GM12878 (cell line): ENCODE measurements at regions of chr2 and their contacts with region 1.

Region 1: DNA sequence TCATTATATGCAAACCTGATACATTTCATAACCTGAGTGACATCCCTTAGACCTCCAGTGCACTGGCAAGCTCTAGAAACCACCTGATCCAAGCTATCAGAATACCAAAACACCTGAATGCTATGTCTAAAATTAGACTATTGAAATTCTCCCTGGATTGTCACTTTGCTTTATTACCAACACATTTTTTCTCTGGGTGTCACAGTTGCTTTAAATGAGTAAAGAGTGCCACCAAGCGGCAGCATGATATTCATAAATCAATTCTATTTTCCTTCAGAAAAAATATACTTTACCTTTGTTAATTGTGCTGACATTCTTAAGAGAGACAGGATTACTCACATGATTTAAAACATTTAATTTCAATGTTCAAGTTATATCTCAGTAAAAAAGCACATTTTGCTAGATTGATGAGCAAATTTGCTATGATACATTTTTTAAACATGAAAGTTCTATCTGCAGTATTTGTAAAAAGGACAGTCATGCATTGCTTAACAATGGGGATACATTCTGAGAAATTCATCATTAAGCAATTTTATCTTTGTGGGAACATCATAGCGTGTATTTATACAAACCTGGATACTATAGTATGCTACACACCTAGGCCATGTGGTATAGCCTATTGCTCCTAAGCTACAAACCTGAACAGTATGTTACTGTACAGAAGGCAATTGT is 338.4 kb upstream of the SLC39A10 start:
- DNase-seq: no peak
- ATAC-seq: peak; percentile 46
- H3K4me3 ChIP-seq: no peak overlapping the region
- H3K27ac ChIP-seq: no peak overlapping the region
- H3K4me1 ChIP-seq: no peaks in the 10 kb centered on the region
- H3K27me3 ChIP-seq: no peaks in the 10 kb centered on the region
- CTCF ChIP-seq: peak; percentile 27 to 76 (median 50); a peak in 5 of 6 replicates
- EP300 ChIP-seq: no peak
- POLR2A ChIP-seq: no peak
- RAD21 ChIP-seq: peak; percentile 85

Region 2: GRCh38 chr2:194166818-194167217 is 1151.8 kb before region 1 on chr2:
- CTCF ChIA-PET with region 1: interaction called, 12 read pairs
- POLR2A ChIA-PET with region 1: no interaction called
- RAD21 ChIA-PET with region 1: no interaction called
- SMC1A ChIA-PET with region 1: interaction called, 3 read pairs
- in situ Hi-C with region 1: loop called (anchors 10 kb)
- intact Hi-C with region 1: loop called (anchors 5 kb)
- DNase-seq: no peak
- ATAC-seq: peak; percentile 67
- H3K4me3 ChIP-seq: no peak overlapping the region
- H3K27ac ChIP-seq: no peak overlapping the region
- H3K4me1 ChIP-seq: no peaks in the 10 kb centered on the region
- H3K27me3 ChIP-seq: no peaks in the 10 kb centered on the region
- CTCF ChIP-seq: peak; percentile 46 to 60 (median 48)
- EP300 ChIP-seq: no peak
- POLR2A ChIP-seq: no peak
- RAD21 ChIP-seq: peak; percentile 70

Region 3: GRCh38 chr2:194867328-194867727 is 451.2 kb before region 1 on chr2:
- CTCF ChIA-PET with region 1: interaction called, 4 read pairs
- POLR2A ChIA-PET with region 1: no interaction called
- RAD21 ChIA-PET with region 1: no interaction called
- SMC1A ChIA-PET with region 1: interaction called, 3 read pairs
- in situ Hi-C with region 1: no loop called
- intact Hi-C with region 1: loop called (anchors 5 kb)
- DNase-seq: no peak
- ATAC-seq: peak; percentile 87
- H3K4me3 ChIP-seq: no peak overlapping the region
- H3K27ac ChIP-seq: no peak overlapping the region
- H3K4me1 ChIP-seq: no peaks in the 10 kb centered on the region
- H3K27me3 ChIP-seq: no peaks in the 10 kb centered on the region
- CTCF ChIP-seq: peak; percentile 38 to 42 (median 39); a peak in 5 of 6 replicates
- EP300 ChIP-seq: no peak
- POLR2A ChIP-seq: no peak
- RAD21 ChIP-seq: peak; percentile 36; the same call in 1 of the 2 replicates

Region 4: GRCh38 chr2:195337597-195337996 is 19.0 kb after region 1 on chr2:
- CTCF ChIA-PET with region 1: interaction called, 10 read pairs
- POLR2A ChIA-PET with region 1: no interaction called
- RAD21 ChIA-PET with region 1: interaction called, 4 read pairs
- SMC1A ChIA-PET with region 1: interaction called, 15 read pairs
- in situ Hi-C with region 1: no loop called
- intact Hi-C with region 1: no loop called
- DNase-seq: no peak
- ATAC-seq: peak; percentile 56
- H3K4me3 ChIP-seq: no peak overlapping the region
- H3K27ac ChIP-seq: no peak overlapping the region
- H3K4me1 ChIP-seq: no peaks in the 10 kb centered on the region
- H3K27me3 ChIP-seq: no peaks in the 10 kb centered on the region
- CTCF ChIP-seq: no peak
- EP300 ChIP-seq: no peak
- POLR2A ChIP-seq: no peak
- RAD21 ChIP-seq: no peak

Region 5: GRCh38 chr2:195559431-195559914 is 240.9 kb after region 1 on chr2:
- CTCF ChIA-PET with region 1: no interaction called
- POLR2A ChIA-PET with region 1: no interaction called
- RAD21 ChIA-PET with region 1: interaction called, 19 read pairs
- SMC1A ChIA-PET with region 1: interaction called, 3 read pairs
- in situ Hi-C with region 1: no loop called
- intact Hi-C with region 1: no loop called
- DNase-seq: peak; percentile 99
- ATAC-seq: peak; percentile 72
- H3K4me3 ChIP-seq: 0 out of 2 replicates have a peak overlapping the region, but pooled peaks have one; percentile 6
- H3K27ac ChIP-seq: peak overlapping the region; percentile 94
- H3K4me1 ChIP-seq: peaks cover 39% of the 10 kb centered on the region
- H3K27me3 ChIP-seq: no peaks in the 10 kb centered on the region
- CTCF ChIP-seq: no peak
- EP300 ChIP-seq: peak; percentile 88 to 97
- POLR2A ChIP-seq: no peak
- RAD21 ChIP-seq: 0 out of 2 replicates have a peak, but pooled peaks have one; percentile 15

Region 6: DNA sequence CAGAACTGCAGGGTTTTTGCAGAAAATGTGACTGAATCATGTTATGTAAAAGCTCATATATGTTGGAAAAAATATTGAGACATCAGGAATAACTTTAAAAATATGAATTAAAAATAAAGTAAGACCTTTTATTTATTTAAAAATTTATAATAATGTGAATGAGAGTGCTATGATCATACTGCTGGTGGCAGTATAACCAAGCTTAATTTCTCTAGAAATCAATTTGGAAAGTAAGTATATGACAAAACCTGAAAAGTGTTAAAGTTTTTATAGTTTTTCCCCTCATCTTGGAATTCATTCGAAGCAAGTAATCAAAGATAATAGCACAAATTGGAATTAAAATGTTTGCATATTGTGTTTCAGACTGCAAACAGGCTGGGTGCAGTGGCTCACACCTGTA is 346.0 kb after region 1 on chr2:
- CTCF ChIA-PET with region 1: interaction called, 54 read pairs
- POLR2A ChIA-PET with region 1: no interaction called
- RAD21 ChIA-PET with region 1: interaction called, 31 read pairs
- SMC1A ChIA-PET with region 1: interaction called, 22 read pairs
- in situ Hi-C with region 1: no loop called
- intact Hi-C with region 1: loop called (anchors 2 kb)
- DNase-seq: no peak
- ATAC-seq: no peak
- H3K4me3 ChIP-seq: no peak overlapping the region
- H3K27ac ChIP-seq: no peak overlapping the region
- H3K4me1 ChIP-seq: no peaks in the 10 kb centered on the region
- H3K27me3 ChIP-seq: no peaks in the 10 kb centered on the region
- CTCF ChIP-seq: no peak; a peak in 1 of 6 replicates
- EP300 ChIP-seq: no peak
- POLR2A ChIP-seq: no peak
- RAD21 ChIP-seq: peak; percentile 45; the same call in 1 of the 2 replicates

Region 7: DNA sequence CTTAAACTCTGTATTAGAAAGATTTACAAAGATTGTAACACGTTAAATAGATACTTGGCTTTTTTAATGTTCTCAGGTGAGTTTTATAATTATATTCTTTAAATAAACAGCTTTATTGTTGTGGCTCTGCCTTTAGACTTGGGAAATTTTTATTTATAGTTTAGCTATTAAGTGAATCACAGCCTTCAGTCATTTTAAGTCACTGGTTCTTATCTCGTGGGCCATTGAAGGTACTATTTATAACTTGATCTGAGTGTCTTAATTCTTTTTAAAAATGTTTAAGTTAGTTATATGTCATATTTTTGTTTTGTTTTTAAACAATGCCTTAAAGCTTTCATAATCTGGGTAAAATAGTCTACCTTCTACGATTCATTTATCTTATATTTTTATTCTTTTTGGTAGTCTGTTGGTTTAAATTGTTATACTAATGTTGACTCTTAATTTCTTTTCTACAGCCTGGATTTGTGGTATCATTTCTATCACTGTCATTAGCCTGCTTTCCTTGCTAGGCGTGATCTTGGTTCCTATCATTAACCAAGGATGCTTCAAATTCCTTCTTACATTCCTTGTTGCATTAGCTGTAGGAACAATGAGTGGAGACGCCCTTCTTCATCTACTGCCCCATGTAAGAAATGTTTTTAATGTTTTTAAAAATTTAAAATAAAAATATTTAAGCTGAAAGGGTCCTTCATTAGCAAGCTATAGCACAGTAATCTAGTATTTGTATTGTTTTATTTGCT is 387.8 kb after region 1 on chr2:
- CTCF ChIA-PET with region 1: no interaction called
- POLR2A ChIA-PET with region 1: no interaction called
- RAD21 ChIA-PET with region 1: no interaction called
- SMC1A ChIA-PET with region 1: no interaction called
- in situ Hi-C with region 1: no loop called
- intact Hi-C with region 1: no loop called
- DNase-seq: no peak
- ATAC-seq: no peak
- H3K4me3 ChIP-seq: no peak overlapping the region
- H3K27ac ChIP-seq: no peak overlapping the region
- H3K4me1 ChIP-seq: no peaks in the 10 kb centered on the region
- H3K27me3 ChIP-seq: no peaks in the 10 kb centered on the region
- CTCF ChIP-seq: no peak
- EP300 ChIP-seq: no peak
- POLR2A ChIP-seq: no peak
- RAD21 ChIP-seq: no peak